Activated naive CD4-positive, alpha-beta T cell treated with anti-CD3 and anti-CD28 coated beads for 36 hours (primary cell): ENCODE measurements at regions of chr17 and their contacts with region 1.

Region 1: GRCh38 chr17:28252436-28252835 is 66.6 kb upstream of the TMEM97 start:
- DNase-seq: no peak
- H3K4me3 Mint-ChIP-seq: no peak overlapping the region
- H3K27ac Mint-ChIP-seq: no peak overlapping the region
- H3K4me1 Mint-ChIP-seq: peaks cover 5% of the 10 kb centered on the region
- H3K27me3 Mint-ChIP-seq: peaks cover 4% of the 10 kb centered on the region

Region 2: GRCh38 chr17:27892866-27893769 is 359.3 kb before region 1 on chr17 and contains the start of gene LYRM9:
- CTCF ChIA-PET with region 1: interaction called, 6 read pairs
- intact Hi-C with region 1: loop called (anchors 1 kb)
- DNase-seq: peak; percentile 92
- H3K4me3 Mint-ChIP-seq: peak within 1 kb of the TSS; percentile 75
- H3K27ac Mint-ChIP-seq: peak within 1 kb of the TSS; percentile 6
- H3K4me1 Mint-ChIP-seq: peaks cover 18% of the 10 kb centered on the region
- H3K27me3 Mint-ChIP-seq: peaks cover 7% of the 10 kb centered on the region
- total RNA-seq, gene LYRM9: 5.3 to 6.9 TPM

Region 3: GRCh38 chr17:28057731-28058279 is 194.6 kb before region 1 on chr17:
- CTCF ChIA-PET with region 1: no interaction called
- intact Hi-C with region 1: no loop called
- DNase-seq: peak; percentile 14
- H3K4me3 Mint-ChIP-seq: no peak overlapping the region
- H3K27ac Mint-ChIP-seq: peak overlapping the region; percentile 51
- H3K4me1 Mint-ChIP-seq: peaks cover 51% of the 10 kb centered on the region
- H3K27me3 Mint-ChIP-seq: no peaks in the 10 kb centered on the region

Region 4: GRCh38 chr17:28133562-28133970 is 118.9 kb before region 1 on chr17:
- CTCF ChIA-PET with region 1: no interaction called
- intact Hi-C with region 1: no loop called
- DNase-seq: no peak
- H3K4me3 Mint-ChIP-seq: no peak overlapping the region
- H3K27ac Mint-ChIP-seq: no peak overlapping the region
- H3K4me1 Mint-ChIP-seq: peaks cover 10% of the 10 kb centered on the region
- H3K27me3 Mint-ChIP-seq: no peaks in the 10 kb centered on the region